Mammary epithelial cell (primary cell): ENCODE measurements at regions of chr6 and their contacts with region 1.

Region 1: DNA sequence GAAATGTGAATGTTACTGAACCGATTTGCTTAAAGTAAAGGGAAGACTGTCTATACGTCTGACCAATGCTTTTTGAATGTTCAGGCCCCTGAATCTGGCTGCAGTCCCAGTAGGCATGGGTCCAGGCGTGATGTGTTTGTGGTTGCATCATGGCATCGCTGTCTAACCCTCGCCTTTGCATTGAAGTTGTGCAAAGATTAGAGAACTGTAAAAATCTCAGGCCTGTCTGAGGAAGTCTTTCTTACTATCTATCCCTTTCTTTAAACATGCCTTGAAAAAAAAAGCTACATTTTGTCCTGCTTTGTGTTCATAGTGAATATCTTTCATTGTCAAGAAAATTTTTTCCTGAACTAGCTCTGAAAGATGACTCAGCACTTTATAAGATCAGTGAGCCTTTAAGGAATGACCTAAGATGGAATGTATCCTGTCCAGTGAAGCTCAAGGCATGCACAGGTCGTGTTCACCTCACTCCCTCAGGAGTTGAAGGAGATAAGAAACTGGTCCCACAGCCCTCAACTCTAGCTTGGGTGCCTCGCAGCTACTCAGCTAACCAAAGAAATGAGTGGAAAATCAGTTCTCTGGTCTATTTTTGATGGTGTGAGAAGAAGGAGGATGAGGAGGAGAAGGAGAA is 48.5 kb downstream of the TPD52L1 start:
- DNase-seq: peak; percentile 89
- H3K4me3 ChIP-seq: peak overlapping the region in 2 of 3 experiments; percentile 6 to 24
- H3K27ac ChIP-seq: peak overlapping the region; percentile 72
- H3K4me1 ChIP-seq: peaks cover 28% of the 10 kb centered on the region
- H3K27me3 ChIP-seq: no peaks in the 10 kb centered on the region
- CTCF ChIP-seq: no peak

Region 2: GRCh38 chr6:125236536-125237327 is 34.7 kb after region 1 on chr6:
- CTCF ChIA-PET with region 1: no interaction called
- dilution Hi-C with region 1: no loop called
- in situ Hi-C with region 1: no loop called
- intact Hi-C with region 1: loop called (anchors 2 kb)
- DNase-seq: no peak
- H3K4me3 ChIP-seq: no peak overlapping the region
- H3K27ac ChIP-seq: no peak overlapping the region
- H3K4me1 ChIP-seq: peaks cover 2% of the 10 kb centered on the region
- H3K27me3 ChIP-seq: no peaks in the 10 kb centered on the region
- CTCF ChIP-seq: no peak